AG04449 (cell line): ENCODE measurements at regions of chr10 and their contacts with region 1.

Region 1: GRCh38 chr10:15585303-15585715 is 134.4 kb downstream of the ITGA8 start:
- DNase-seq: no peak
- H3K4me3 ChIP-seq: no peak overlapping the region
- CTCF ChIP-seq: peak; percentile 83

Region 2: GRCh38 chr10:15558136-15558535 is 27.2 kb before region 1 on chr10:
- CTCF ChIA-PET with region 1: interaction called, 15 read pairs
- POLR2A ChIA-PET with region 1: no interaction called
- DNase-seq: peak; percentile 94
- H3K4me3 ChIP-seq: no peak overlapping the region
- CTCF ChIP-seq: no peak

Region 3: GRCh38 chr10:15571575-15571974 is 13.7 kb before region 1 on chr10:
- CTCF ChIA-PET with region 1: interaction called, 42 read pairs
- POLR2A ChIA-PET with region 1: no interaction called
- DNase-seq: peak; percentile 7
- H3K4me3 ChIP-seq: no peak overlapping the region
- CTCF ChIP-seq: no peak

Region 4: DNA sequence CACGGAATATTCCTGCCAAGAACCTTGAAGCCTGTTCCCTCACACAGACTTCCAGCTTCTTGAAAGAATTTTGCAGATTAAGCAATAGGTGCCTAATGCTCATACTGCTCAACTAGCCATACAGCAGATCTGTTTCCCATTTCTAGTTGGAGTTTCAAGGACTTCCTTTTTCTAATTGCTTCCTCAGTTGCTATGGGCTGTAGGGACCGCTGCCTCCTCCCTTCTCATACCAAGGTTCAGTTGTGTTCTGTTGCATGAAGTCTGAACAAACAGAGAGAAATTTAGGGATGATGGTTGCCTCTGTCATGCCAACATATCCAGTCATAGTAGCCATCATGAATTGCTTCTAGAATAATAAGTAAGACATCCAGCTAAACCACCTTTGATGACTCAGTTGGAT is 127.6 kb after region 1 on chr10:
- CTCF ChIA-PET with region 1: interaction called, 17 read pairs
- POLR2A ChIA-PET with region 1: no interaction called
- DNase-seq: peak; percentile 14
- H3K4me3 ChIP-seq: no peak overlapping the region
- CTCF ChIP-seq: no peak